ENCODE measurements at regions of chr6 and their contacts with region 1.

Region 1: GRCh38 chr6:53426667-53427270 is 78.0 kb upstream of the ELOVL5 start:
- DNase-seq: no peak
- H3K4me3 Mint-ChIP-seq: no peak overlapping the region
- H3K27ac Mint-ChIP-seq: no peak overlapping the region
- H3K4me1 Mint-ChIP-seq: peaks cover 30% of the 10 kb centered on the region
- H3K27me3 Mint-ChIP-seq: peaks cover 11% of the 10 kb centered on the region

Region 2: GRCh38 chr6:53230775-53231467 is 195.8 kb before region 1 on chr6:
- CTCF ChIA-PET with region 1: no interaction called
- POLR2A ChIA-PET with region 1: no interaction called
- intact Hi-C with region 1: loop called (anchors 1 kb)
- DNase-seq: no peak
- H3K4me3 Mint-ChIP-seq: no peak overlapping the region
- H3K27ac Mint-ChIP-seq: no peak overlapping the region
- H3K4me1 Mint-ChIP-seq: peaks cover 32% of the 10 kb centered on the region
- H3K27me3 Mint-ChIP-seq: no peaks in the 10 kb centered on the region

Region 3: GRCh38 chr6:53309059-53309900 is 117.5 kb before region 1 on chr6:
- CTCF ChIA-PET with region 1: no interaction called
- POLR2A ChIA-PET with region 1: interaction called, 3 read pairs
- intact Hi-C with region 1: loop called (anchors 2 kb)
- DNase-seq: no peak
- H3K4me3 Mint-ChIP-seq: no peak overlapping the region
- H3K27ac Mint-ChIP-seq: peak overlapping the region; percentile 44
- H3K4me1 Mint-ChIP-seq: peaks cover 80% of the 10 kb centered on the region
- H3K27me3 Mint-ChIP-seq: no peaks in the 10 kb centered on the region

Region 4: DNA sequence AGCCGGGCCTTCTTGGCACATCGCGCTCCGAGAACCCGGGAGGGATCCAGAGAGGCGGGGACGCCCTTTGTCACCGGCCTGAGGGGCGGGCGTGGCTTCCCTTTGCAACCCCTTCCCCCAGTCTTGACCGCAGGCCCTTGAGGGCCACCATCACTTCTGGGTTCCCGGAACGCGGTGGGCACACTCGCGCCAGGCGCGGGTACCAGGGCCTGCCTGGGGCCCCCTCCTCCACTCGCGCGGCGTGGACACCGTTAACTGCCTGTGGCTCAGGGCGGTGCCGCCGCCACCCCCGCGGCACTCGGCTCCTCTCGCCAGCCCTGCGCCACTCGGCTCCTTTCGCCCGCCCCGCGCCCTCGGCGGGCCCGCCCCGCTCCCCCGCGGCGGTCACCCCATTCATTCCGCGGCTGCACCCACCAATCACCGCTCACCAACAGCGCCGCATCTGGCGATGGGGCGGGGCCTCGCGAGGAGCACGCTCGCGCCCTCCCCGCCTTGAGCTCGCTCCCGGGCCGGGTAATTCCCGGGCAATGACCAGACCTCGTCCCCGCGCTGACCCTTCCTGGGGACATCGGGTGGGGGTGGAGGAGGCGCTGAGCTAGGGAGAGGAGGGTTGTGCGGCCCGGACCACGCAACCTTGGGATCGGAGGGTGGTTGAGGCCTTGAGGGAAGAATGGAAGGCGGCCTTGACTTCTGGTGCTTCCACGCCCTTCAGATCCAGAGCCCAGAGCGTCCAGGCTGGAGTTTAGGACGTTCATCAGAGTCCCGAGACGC is 67.5 kb before region 1 on chr6:
- CTCF ChIA-PET with region 1: no interaction called
- POLR2A ChIA-PET with region 1: no interaction called
- intact Hi-C with region 1: loop called (anchors 1 kb)
- DNase-seq: peak; percentile 95
- H3K4me3 Mint-ChIP-seq: peak overlapping the region; percentile 92
- H3K27ac Mint-ChIP-seq: peak overlapping the region; percentile 98
- H3K4me1 Mint-ChIP-seq: peaks cover 39% of the 10 kb centered on the region
- H3K27me3 Mint-ChIP-seq: no peaks in the 10 kb centered on the region

Region 5: GRCh38 chr6:53375847-53376246 is 50.9 kb before region 1 on chr6:
- CTCF ChIA-PET with region 1: no interaction called
- POLR2A ChIA-PET with region 1: no interaction called
- intact Hi-C with region 1: no loop called
- DNase-seq: no peak
- H3K4me3 Mint-ChIP-seq: no peak overlapping the region
- H3K27ac Mint-ChIP-seq: no peak overlapping the region
- H3K4me1 Mint-ChIP-seq: no peaks in the 10 kb centered on the region
- H3K27me3 Mint-ChIP-seq: no peaks in the 10 kb centered on the region

Region 6: DNA sequence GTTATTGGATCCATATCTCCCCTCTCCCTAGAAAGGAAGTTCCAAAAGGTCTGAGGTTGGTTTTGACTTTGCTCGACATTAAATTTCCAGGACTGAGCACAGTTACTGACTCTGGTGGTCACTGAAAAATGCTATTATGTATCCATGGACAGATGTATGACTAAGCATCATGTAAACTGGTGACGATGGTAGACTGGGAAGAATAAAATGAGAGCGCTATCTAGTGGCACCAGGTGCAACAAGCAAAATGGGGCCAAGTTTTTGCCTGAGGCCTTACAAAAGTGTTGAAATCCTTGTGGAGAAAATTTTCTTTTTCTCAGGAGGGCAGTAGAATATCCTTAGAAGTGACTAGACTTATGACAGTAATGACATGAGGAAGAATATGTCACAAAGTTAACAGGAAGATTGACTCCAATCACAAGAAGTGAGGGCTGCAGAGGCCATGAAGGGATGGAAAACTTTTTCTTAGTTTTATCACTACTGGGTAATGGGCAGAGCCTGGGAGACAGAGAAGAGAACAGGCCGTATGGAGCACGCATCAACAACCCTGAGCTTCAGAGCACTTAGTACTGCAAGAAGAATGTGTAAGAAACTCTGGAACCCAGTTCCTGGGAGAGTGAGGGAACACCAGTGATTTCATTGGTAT is 10.9 kb after region 1 on chr6:
- CTCF ChIA-PET with region 1: interaction called, 10 read pairs
- POLR2A ChIA-PET with region 1: interaction called, 14 read pairs
- intact Hi-C with region 1: loop called (anchors 1 kb)
- DNase-seq: peak; percentile 36
- H3K4me3 Mint-ChIP-seq: no peak overlapping the region
- H3K27ac Mint-ChIP-seq: no peak overlapping the region
- H3K4me1 Mint-ChIP-seq: peaks cover 21% of the 10 kb centered on the region
- H3K27me3 Mint-ChIP-seq: peaks cover 7% of the 10 kb centered on the region

Region 7: DNA sequence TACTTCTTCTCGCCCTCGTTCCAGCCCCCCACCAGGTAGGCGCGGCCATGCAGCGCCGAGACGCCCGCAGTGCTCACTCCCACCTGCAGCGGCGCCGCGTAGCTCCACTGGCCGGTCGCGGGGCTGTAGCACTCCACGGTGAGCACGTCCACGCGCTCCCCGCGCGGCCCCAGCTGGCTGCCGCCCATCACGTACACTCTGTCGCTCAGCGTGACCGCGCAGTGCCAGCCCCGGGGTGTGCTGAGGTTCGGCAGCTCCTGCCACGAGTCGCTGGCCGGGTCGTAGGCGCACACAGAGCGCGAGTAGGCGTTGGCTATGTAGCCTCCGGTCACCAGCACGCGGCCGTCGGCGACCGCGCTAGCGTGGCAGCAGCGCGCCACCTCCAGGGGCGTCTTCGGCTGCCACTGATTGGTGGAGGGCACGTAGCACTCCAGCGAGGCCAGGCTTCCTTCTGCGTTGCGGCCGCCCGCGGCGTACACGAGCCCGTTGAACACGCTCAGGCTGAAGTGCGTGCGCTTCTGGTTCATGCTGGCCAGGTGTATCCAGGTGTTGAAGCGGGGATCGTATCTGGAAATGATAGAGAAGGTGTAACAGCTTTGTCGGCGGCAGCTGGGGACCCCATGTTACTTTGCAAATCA is 225.1 kb after region 1 on chr6:
- CTCF ChIA-PET with region 1: no interaction called
- POLR2A ChIA-PET with region 1: no interaction called
- intact Hi-C with region 1: loop called (anchors 5 kb)
- DNase-seq: peak; percentile 86
- H3K4me3 Mint-ChIP-seq: peak overlapping the region; percentile 85
- H3K27ac Mint-ChIP-seq: peak overlapping the region; percentile 80
- H3K4me1 Mint-ChIP-seq: peaks cover 31% of the 10 kb centered on the region
- H3K27me3 Mint-ChIP-seq: no peaks in the 10 kb centered on the region